ENCODE measurements at regions of chr2 and their contacts with region 1.

Region 1: GRCh38 chr2:170973492-170974303 is 44.6 kb downstream of the GORASP2 start:
- DNase-seq: peak; percentile 96 to 99 (median 98)
- ATAC-seq: peak; percentile 92
- H3K4me3 ChIP-seq: peak overlapping the region; percentile 56
- H3K27ac ChIP-seq: peak overlapping the region; percentile 73
- H3K4me1 ChIP-seq: peaks cover 12 to 20% of the 10 kb centered on the region in 2 experiments; a peak in 4 of 5 replicates
- H3K27me3 ChIP-seq: no peaks in the 10 kb centered on the region
- CTCF ChIP-seq: peak; percentile 91 to 96 (median 93)
- EP300 ChIP-seq: peak; percentile 56
- POLR2A ChIP-seq: peak; percentile 77
- RAD21 ChIP-seq: peak; percentile 99 to 100

Region 2: DNA sequence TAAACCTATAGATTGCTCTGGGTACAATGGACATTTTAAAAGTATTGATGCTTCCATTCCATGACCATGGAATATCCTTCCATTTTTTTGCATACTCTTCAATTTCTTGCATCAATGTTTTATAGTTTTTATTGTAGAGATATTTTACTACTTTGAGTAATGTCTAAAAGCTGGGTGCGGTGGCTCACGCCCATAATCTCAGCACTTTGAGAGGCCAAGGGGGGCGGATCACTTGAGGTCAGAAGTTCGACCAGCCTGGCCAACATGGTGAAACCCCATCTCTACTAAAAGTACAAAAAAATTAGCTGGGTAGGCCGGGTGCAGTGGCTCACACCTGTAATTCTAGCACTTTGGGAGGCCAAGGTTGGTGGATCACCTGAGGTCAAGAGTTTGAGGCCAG is 98.5 kb after region 1 on chr2:
- CTCF ChIA-PET with region 1: no interaction called
- POLR2A ChIA-PET with region 1: no interaction called
- in situ Hi-C with region 1: no loop called
- intact Hi-C with region 1: no loop called
- DNase-seq: no peak
- ATAC-seq: no peak
- H3K4me3 ChIP-seq: no peak overlapping the region
- H3K27ac ChIP-seq: no peak overlapping the region
- H3K4me1 ChIP-seq: 0 out of 5 replicates have a peak, but pooled peaks cover 0 to under 1% of the 10 kb centered on the region in 2 experiments
- H3K27me3 ChIP-seq: no peaks in the 10 kb centered on the region
- CTCF ChIP-seq: no peak
- EP300 ChIP-seq: no peak
- POLR2A ChIP-seq: no peak
- RAD21 ChIP-seq: no peak

Region 3: GRCh38 chr2:171086352-171087290 is 112.9 kb after region 1 on chr2:
- CTCF ChIA-PET with region 1: no interaction called
- POLR2A ChIA-PET with region 1: no interaction called
- in situ Hi-C with region 1: no loop called
- intact Hi-C with region 1: loop called (anchors 5 kb)
- DNase-seq: peak; percentile 37 to 75 (median 58)
- ATAC-seq: peak; percentile 82
- H3K4me3 ChIP-seq: no peak overlapping the region
- H3K27ac ChIP-seq: peak overlapping the region; percentile 19; the same call in 1 of the 3 replicates
- H3K4me1 ChIP-seq: peaks cover 0 to 21% of the 10 kb centered on the region in 2 experiments; a peak in 2 of 5 replicates
- H3K27me3 ChIP-seq: no peaks in the 10 kb centered on the region
- CTCF ChIP-seq: peak; percentile 56 to 78 (median 70)
- EP300 ChIP-seq: peak; percentile 47; the same call in 1 of the 2 replicates
- POLR2A ChIP-seq: no peak
- RAD21 ChIP-seq: peak; percentile 53 to 54

Region 4: GRCh38 chr2:171416009-171416926 is 442.6 kb after region 1 on chr2:
- CTCF ChIA-PET with region 1: interaction called, 25 read pairs
- POLR2A ChIA-PET with region 1: no interaction called
- in situ Hi-C with region 1: loop called (anchors 5 kb)
- intact Hi-C with region 1: loop called (anchors 1 kb)
- DNase-seq: peak; percentile 44 to 90 (median 64)
- ATAC-seq: peak; percentile 99
- H3K4me3 ChIP-seq: no peak overlapping the region
- H3K27ac ChIP-seq: no peak overlapping the region
- H3K4me1 ChIP-seq: peaks cover 0 to 16% of the 10 kb centered on the region in 2 experiments; a peak in 3 of 5 replicates
- H3K27me3 ChIP-seq: no peaks in the 10 kb centered on the region
- CTCF ChIP-seq: peak; percentile 86 to 93 (median 92)
- EP300 ChIP-seq: 0 out of 2 replicates have a peak, but pooled peaks have one; percentile 17
- POLR2A ChIP-seq: no peak
- RAD21 ChIP-seq: peak; percentile 90 to 96

Region 5: GRCh38 chr2:171522052-171522787 is 548.5 kb after region 1 on chr2 and contains the start of gene CYBRD1:
- CTCF ChIA-PET with region 1: no interaction called
- POLR2A ChIA-PET with region 1: no interaction called
- in situ Hi-C with region 1: no loop called
- intact Hi-C with region 1: loop called (anchors 10 kb)
- DNase-seq: peak; percentile 92 to 96 (median 92)
- ATAC-seq: peak; percentile 84
- H3K4me3 ChIP-seq: peak within 1 kb of the TSS; percentile 82
- H3K27ac ChIP-seq: peak within 1 kb of the TSS; percentile 92
- H3K4me1 ChIP-seq: peaks cover 17 to 19% of the 10 kb centered on the region in 2 experiments
- H3K27me3 ChIP-seq: no peaks in the 10 kb centered on the region
- CTCF ChIP-seq: peak; percentile 14 to 36 (median 15); a peak in 4 of 6 replicates
- EP300 ChIP-seq: no peak; the same call in 1 of the 2 replicates
- POLR2A ChIP-seq: peak; percentile 89
- RAD21 ChIP-seq: peak; percentile 20 to 25; a peak in 3 of 4 replicates
- polyA plus RNA-seq, gene CYBRD1: 9.6 to 10.7 TPM